Activated CD8-positive, alpha-beta T cell treated with anti-CD3 and anti-CD28 coated beads for 36 hours (primary cell): ENCODE measurements at regions of chr1 and their contacts with region 1.

Region 1: DNA sequence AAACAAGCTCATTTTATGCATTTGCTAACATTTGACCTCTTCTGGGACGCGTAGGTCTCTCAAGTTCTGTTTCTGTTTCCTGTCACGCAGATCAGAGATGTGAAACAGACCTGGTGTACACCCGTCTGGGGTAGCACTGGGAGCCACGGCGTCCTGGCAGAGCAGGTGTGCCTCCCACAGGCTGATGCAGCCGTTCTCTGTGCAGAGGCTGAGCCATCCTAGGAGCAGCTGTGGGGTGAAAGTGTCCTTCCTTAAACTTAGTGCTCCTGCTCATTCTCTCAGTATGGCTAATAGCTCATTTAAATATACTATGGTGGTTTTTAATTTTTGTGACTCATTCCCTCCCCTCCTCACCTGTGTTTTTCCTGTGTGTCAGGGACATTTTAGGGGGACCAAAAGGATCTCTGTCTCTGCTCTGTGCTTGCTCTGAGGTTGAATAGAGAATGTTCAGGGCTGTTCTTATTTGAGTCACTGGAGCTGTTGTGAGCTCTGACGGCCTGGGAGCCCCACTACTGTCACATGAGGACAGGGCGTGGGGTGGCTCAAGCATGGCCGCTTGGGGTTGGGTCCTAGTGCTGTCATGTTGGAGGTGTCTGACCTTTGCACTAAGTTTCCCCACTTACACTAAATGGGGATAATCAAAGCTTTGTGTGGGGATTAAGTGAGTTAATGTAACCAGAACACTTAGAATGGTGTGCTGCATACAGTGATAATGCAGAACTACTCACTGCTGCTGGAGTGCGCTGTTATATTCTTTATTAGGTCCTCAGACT is 43.0 kb downstream of the GALNT2 start:
- DNase-seq: peak; percentile 92
- ATAC-seq: peak; percentile 90
- H3K4me3 Mint-ChIP-seq: peak overlapping the region; percentile 24
- H3K27ac Mint-ChIP-seq: peak overlapping the region; percentile 89
- H3K4me1 Mint-ChIP-seq: peaks cover 83% of the 10 kb centered on the region
- H3K27me3 Mint-ChIP-seq: no peaks in the 10 kb centered on the region
- CTCF ChIP-seq: no peak

Region 2: DNA sequence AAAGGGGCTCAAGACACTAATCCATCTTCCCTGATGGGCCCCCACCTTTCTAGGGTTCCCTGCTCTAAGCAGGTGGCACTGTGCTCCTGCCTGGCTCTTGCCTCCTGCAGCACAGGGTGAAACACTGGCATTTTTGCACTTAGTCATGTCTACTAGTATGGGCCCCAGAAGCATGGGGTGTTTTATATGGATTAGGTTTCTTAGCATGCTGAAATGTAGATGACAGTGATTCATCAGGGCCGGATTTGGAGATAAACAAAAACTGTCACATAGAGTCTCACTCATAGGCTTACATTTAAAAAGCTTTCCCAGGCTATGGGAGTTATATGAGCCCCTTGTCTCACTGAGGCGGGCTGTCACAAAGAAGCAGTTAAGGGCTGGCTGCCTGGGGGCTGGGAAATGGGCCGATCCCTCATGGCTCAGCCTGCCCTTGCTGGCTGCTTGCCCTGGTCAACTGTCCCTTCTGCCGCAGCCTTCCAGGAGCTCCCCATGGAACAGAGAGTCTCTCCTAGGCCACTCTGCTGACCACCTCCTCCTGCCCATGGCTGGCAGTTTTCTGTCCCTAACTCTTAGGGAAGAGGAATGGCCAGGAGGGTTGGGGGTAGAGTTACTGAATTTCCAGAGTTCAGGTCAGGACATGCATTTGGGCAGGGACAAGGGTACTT is 36.6 kb before region 1 on chr1:
- CTCF ChIA-PET with region 1: interaction called, 7 read pairs
- POLR2A ChIA-PET with region 1: interaction called, 5 read pairs
- intact Hi-C with region 1: loop called (anchors 5 kb)
- DNase-seq: no peak
- ATAC-seq: peak; percentile 9
- H3K4me3 Mint-ChIP-seq: no peak overlapping the region
- H3K27ac Mint-ChIP-seq: no peak overlapping the region
- H3K4me1 Mint-ChIP-seq: peaks cover 78% of the 10 kb centered on the region
- H3K27me3 Mint-ChIP-seq: no peaks in the 10 kb centered on the region
- CTCF ChIP-seq: no peak

Region 3: DNA sequence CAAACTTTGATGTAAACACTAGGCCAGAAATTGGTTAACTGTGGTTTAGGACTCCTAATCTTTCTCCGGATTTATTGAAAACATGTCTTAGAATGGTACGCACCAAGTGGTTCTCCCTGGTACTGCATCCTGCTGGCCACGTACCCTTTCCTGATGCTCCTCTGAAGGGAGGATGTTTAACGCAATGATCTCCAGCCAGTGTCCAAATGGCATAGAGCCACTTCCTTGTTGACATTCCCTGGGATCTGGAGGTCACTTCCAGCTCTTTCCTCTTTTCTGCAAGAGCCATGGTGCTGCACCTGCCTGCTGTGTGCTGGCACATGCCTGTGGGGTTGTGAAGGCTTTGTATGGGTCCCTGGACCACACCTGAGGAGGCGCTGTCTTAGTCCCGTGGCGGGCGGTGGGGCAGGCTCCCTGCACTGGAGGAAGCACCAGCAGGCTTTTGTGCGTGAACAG is 10.9 kb after region 1 on chr1:
- CTCF ChIA-PET with region 1: interaction called, 41 read pairs
- POLR2A ChIA-PET with region 1: interaction called, 20 read pairs
- intact Hi-C with region 1: no loop called
- DNase-seq: peak; percentile 42
- ATAC-seq: no peak
- H3K4me3 Mint-ChIP-seq: no peak overlapping the region
- H3K27ac Mint-ChIP-seq: no peak overlapping the region
- H3K4me1 Mint-ChIP-seq: peaks cover 60% of the 10 kb centered on the region
- H3K27me3 Mint-ChIP-seq: no peaks in the 10 kb centered on the region
- CTCF ChIP-seq: peak; percentile 80

Region 4: DNA sequence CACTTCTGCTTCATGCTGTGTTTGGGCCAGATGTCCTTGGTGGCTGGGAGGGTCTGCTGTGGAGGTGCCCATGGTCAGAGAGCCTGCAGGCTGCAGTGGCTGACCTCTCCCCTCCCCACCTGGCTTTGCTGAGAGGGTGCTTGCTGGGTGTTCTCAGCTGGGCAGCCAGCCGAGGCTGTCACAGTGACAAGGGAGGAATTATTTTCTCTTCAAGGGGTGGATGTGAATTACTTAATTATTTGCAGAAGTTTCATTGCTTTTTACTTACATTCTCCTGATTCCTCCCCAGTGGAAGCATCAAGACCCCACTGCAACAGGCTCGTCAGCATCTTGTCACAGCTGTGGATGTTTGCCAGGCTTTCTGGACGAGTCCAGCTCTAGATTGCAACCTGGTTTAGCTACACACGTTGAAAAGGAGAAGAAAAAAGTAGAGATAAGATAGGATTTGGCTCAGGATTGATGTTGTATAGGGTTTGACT is 27.3 kb after region 1 on chr1:
- CTCF ChIA-PET with region 1: no interaction called
- POLR2A ChIA-PET with region 1: no interaction called
- intact Hi-C with region 1: no loop called
- DNase-seq: no peak
- ATAC-seq: no peak
- H3K4me3 Mint-ChIP-seq: no peak overlapping the region
- H3K27ac Mint-ChIP-seq: no peak overlapping the region
- H3K4me1 Mint-ChIP-seq: peaks cover 27% of the 10 kb centered on the region
- H3K27me3 Mint-ChIP-seq: no peaks in the 10 kb centered on the region
- CTCF ChIP-seq: no peak